Esophagus muscularis mucosa (tissue), 4 donors: ENCODE measurements at regions of chr20 and their contacts with region 1.

Region 1: GRCh38 chr20:25178563-25179438 is 16.7 kb upstream of the ENTPD6 start:
- DNase-seq: no peak
- H3K4me3 ChIP-seq: no peak overlapping the region
- H3K27ac ChIP-seq: peak overlapping the region; percentile 46 to 74 (median 62)
- H3K4me1 ChIP-seq: peaks cover 6 to 21% (median 20%) of the 10 kb centered on the region in 4 donors
- H3K27me3 ChIP-seq: no peaks in the 10 kb centered on the region
- CTCF ChIP-seq: peak; percentile 71 to 79 (median 79)
- EP300 ChIP-seq: no peak
- POLR2A ChIP-seq: no peak

Region 2: GRCh38 chr20:25081065-25081729 is 97.6 kb before region 1 on chr20:
- intact Hi-C with region 1: loop called (anchors 5 kb)
- DNase-seq: no peak
- H3K4me3 ChIP-seq: no peak overlapping the region
- H3K27ac ChIP-seq: no peak overlapping the region
- H3K4me1 ChIP-seq: peaks cover 23 to 55% (median 54%) of the 10 kb centered on the region in 4 donors
- H3K27me3 ChIP-seq: peaks cover 5 to 77% (median 51%) of the 10 kb centered on the region in 4 donors
- CTCF ChIP-seq: no peak
- EP300 ChIP-seq: no peak
- POLR2A ChIP-seq: no peak